ENCODE measurements at regions of chr1 and their contacts with region 1.

Region 1: GRCh38 chr1:235128456-235129328 is at the start of gene TOMM20:
- DNase-seq: peak; percentile 93 to 97 (median 95)
- H3K4me3 ChIP-seq: peak within 1 kb of the TSS; percentile 67 to 100 (median 93)
- H3K27ac ChIP-seq: peak within 1 kb of the TSS; percentile 42 to 94 (median 89)
- H3K27me3 ChIP-seq: no peaks in the 10 kb centered on the region
- CTCF ChIP-seq: peak in 49 of 56 donors; percentile 3 to 63 (median 38)
- total RNA-seq, gene TOMM20: 96.2 to 291 (median 209) TPM

Region 2: GRCh38 chr1:235105051-235106043 is 23.3 kb before region 1 on chr1:
- intact Hi-C with region 1: loop called in 1 of 2 experiments (anchors 2 kb)
- DNase-seq: no peak
- H3K4me3 ChIP-seq: no peak overlapping the region
- H3K27ac ChIP-seq: no peak overlapping the region
- H3K27me3 ChIP-seq: no peaks in the 10 kb centered on the region
- CTCF ChIP-seq: no peak

Region 3: GRCh38 chr1:235160957-235161684 is 32.4 kb after region 1 on chr1 and contains the start of gene RBM34:
- intact Hi-C with region 1: loop called in 1 of 2 experiments (anchors 1 kb)
- DNase-seq: peak; percentile 84 to 95 (median 90)
- H3K4me3 ChIP-seq: peak within 1 kb of the TSS; percentile 62 to 98 (median 83)
- H3K27ac ChIP-seq: peak within 1 kb of the TSS; percentile 2 to 97 (median 87)
- H3K27me3 ChIP-seq: no peaks in the 10 kb centered on the region
- CTCF ChIP-seq: peak in 49 of 56 donors; percentile 6 to 65 (median 42)
- total RNA-seq, gene RBM34: 32.7 to 73.0 (median 56.5) TPM

Region 4: GRCh38 chr1:235215453-235215852 is 86.8 kb after region 1 on chr1:
- intact Hi-C with region 1: no loop called
- DNase-seq: no peak
- H3K4me3 ChIP-seq: no peak overlapping the region
- H3K27ac ChIP-seq: no peak overlapping the region
- H3K27me3 ChIP-seq: no peaks in the 10 kb centered on the region
- CTCF ChIP-seq: no peak

Region 5: GRCh38 chr1:235504496-235505222 is 376.0 kb after region 1 on chr1:
- intact Hi-C with region 1: loop called (anchors 10 kb)
- DNase-seq: peak; percentile 98 to 99 (median 99)
- H3K4me3 ChIP-seq: peak overlapping the region; percentile 67 to 95 (median 85)
- H3K27ac ChIP-seq: peak overlapping the region; percentile 72 to 100 (median 97)
- H3K27me3 ChIP-seq: no peaks in the 10 kb centered on the region
- CTCF ChIP-seq: peak; percentile 61 to 99 (median 94)

Region 6: DNA sequence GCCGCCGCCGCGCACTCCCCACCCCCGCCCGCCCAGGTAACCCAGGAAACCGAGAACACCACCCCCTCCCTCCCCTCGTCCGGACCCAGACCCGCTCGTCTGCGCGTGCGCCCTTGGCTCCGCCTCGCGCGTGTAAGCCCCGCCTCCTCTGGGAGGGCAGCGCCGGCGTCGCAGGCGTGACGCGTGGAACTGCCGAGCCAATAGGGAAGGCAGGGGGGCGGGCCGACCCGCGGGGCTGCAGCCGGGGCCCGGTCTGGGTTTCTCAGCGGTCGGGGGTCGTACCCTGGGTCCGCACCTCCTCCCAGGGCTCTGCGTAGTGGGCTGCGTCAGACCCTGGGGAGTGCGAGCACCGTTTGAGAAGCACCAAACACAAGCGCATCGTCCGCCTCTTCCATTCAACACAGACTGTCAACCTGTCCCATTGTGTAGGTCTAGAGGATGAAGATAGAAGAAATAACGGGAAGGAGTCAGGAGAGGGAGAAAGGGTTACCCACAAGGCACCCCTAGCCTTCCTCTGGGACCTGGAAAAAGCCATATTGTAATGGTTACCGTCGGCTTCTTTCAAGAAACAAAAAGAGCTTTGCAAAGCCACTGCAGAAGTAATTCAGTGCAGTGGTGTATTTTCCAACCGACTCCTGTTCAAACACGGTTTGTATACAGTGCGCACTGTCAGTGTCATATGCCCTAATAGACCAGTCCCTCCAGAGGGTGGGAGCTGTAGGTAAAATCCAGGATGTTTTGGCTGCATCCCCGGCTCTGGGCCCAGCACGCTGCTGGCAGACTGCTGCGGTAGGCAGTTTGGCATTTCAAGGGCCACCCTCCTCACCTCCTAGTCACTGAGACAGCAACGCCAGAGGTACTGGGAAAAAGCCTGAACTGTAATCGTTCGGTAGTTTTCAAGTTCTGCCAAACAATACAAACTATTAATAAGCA is 738.5 kb after region 1 on chr1:
- intact Hi-C with region 1: loop called in 1 of 2 experiments (anchors 10 kb)
- DNase-seq: peak; percentile 93 to 99 (median 96)
- H3K4me3 ChIP-seq: peak overlapping the region; percentile 56 to 100 (median 97)
- H3K27ac ChIP-seq: peak overlapping the region; percentile 49 to 98 (median 92)
- H3K27me3 ChIP-seq: no peaks in the 10 kb centered on the region
- CTCF ChIP-seq: peak in 4 of 56 donors; percentile 13 to 24 (median 17)

Measured in dorsolateral prefrontal cortex (tissue), 120 donors.